HepG2 (cell line): ENCODE measurements at regions of chr2 and their contacts with region 1.

Region 1: DNA sequence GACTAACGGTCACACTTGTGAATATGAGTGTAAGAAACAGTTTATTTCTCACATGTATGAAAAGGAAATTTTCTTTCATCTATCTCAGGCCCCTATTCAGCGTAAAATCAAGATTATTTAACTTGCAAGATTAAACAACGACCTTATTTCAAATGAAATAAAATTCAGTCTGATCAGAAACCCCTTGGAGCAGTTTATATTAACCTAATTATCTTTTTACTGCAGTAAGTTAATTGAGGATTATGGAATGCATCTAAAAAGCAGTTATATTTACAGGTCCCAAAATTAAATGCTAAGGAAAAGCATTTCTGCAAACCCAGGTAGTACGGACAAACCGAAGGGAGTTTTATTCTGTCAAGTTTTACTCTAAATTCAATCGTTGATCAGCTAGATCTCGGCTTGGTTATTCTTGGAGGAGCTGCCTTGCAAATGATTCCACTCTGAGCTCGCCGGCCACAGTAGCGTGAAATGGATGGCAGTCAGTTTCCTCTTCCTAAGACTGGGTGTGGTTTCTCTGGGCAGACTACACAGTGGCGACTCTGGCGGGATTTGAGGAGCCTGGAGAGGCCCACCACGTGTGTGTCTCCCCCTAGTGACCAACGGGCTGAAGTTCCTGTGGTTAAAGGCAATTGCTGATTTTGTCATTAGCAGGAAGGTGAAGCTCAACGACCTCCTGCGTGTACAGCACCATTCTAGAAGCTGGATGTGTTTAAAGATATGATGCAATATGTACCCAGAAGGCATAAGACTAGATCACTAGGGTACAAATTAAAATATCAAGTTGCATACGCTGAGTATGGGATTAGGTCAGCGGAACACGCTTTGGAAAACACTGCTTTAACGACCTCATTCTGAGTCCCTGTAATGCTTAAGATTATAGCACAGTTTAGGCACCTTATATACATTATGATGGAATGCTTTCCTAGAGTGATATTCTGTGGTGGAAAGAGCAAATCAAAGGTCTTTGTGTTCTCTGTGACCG is 36.4 kb downstream of the PRKRA start:
- DNase-seq: peak; percentile 90
- ATAC-seq: peak; percentile 96
- H3K4me3 ChIP-seq: peak overlapping the region; percentile 60 to 75 (median 65)
- H3K27ac ChIP-seq: no peak overlapping the region
- H3K4me1 ChIP-seq: peaks cover 16% of the 10 kb centered on the region; the same call in 1 of the 2 replicates
- H3K27me3 ChIP-seq: peaks cover 0 to 9% of the 10 kb centered on the region in 2 experiments; a peak in 1 of 5 replicates
- CTCF ChIP-seq: peak; percentile 97
- EP300 ChIP-seq: no peak; a peak in 1 of 4 replicates
- POLR2A ChIP-seq: no peak
- RAD21 ChIP-seq: peak; percentile 86

Region 2: DNA sequence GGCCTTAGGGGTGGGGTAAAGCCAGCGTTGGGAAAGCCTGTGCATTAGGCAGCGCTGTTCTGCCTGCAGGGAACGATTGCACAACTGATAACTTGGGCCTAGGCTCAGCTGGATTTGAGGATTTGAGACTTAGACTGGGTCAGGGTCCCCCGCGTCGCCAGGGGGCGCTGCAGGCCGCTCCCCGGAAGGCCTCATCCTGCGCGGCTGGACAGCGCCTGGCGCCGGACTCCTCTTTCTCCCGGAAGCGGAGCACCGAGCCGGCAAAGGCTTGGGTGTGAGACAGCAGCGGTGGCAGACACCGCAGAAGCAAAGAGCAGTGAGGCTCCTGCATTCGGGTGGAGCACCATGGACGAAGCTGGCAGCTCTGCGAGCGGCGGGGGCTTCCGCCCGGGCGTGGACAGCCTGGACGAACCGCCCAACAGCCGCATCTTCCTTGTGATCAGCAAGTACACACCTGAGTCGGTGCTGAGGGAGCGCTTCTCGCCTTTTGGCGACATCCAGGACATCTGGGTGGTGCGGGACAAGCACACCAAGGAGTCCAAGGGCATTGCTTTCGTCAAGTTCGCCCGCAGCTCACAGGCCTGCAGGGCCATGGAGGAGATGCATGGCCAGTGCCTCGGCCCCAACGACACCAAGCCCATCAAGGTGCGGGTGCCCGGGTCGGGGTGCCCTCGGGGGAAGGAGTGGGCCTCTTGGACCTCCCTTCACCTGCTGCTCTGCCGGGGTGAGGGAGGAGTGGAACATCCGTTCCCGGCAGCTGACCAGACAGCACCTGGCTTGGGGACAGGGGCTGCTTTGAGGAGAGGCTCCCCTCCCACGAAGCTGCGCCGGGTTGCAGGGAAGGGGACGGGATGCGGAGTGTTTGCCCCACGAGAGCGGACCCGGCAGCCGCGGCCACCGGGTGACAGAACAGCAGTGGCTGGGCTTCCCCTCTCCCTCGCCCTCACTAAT is 302.1 kb before region 1 on chr2 and contains the start of gene RBM45:
- CTCF ChIA-PET with region 1: interaction called, 6 read pairs
- POLR2A ChIA-PET with region 1: interaction called, 10 read pairs
- in situ Hi-C with region 1: loop called (anchors 10 kb)
- intact Hi-C with region 1: loop called (anchors 1 kb)
- DNase-seq: peak; percentile 92
- ATAC-seq: peak; percentile 98
- H3K4me3 ChIP-seq: peak within 1 kb of the TSS; percentile 65 to 95 (median 87)
- H3K27ac ChIP-seq: peak within 1 kb of the TSS; percentile 68
- H3K4me1 ChIP-seq: peaks cover 15% of the 10 kb centered on the region
- H3K27me3 ChIP-seq: no peaks in the 10 kb centered on the region
- CTCF ChIP-seq: peak; percentile 99
- EP300 ChIP-seq: peak; percentile 40 to 66; a peak in 1 of 4 replicates
- POLR2A ChIP-seq: peak; percentile 97
- RAD21 ChIP-seq: peak; percentile 78
- total RNA-seq, gene RBM45: 25.2 and 30.4 TPM in 2 replicates

Region 3: GRCh38 chr2:178306352-178307073 is 108.0 kb before region 1 on chr2:
- CTCF ChIA-PET with region 1: interaction called, 11 read pairs
- POLR2A ChIA-PET with region 1: no interaction called
- in situ Hi-C with region 1: loop called (anchors 10 kb)
- intact Hi-C with region 1: loop called (anchors 1 kb)
- DNase-seq: peak; percentile 62
- ATAC-seq: peak; percentile 100
- H3K4me3 ChIP-seq: no peak overlapping the region
- H3K27ac ChIP-seq: no peak overlapping the region
- H3K4me1 ChIP-seq: no peaks in the 10 kb centered on the region
- H3K27me3 ChIP-seq: no peaks in the 10 kb centered on the region
- CTCF ChIP-seq: peak; percentile 87
- EP300 ChIP-seq: no peak
- POLR2A ChIP-seq: no peak
- RAD21 ChIP-seq: peak; percentile 68

Region 4: DNA sequence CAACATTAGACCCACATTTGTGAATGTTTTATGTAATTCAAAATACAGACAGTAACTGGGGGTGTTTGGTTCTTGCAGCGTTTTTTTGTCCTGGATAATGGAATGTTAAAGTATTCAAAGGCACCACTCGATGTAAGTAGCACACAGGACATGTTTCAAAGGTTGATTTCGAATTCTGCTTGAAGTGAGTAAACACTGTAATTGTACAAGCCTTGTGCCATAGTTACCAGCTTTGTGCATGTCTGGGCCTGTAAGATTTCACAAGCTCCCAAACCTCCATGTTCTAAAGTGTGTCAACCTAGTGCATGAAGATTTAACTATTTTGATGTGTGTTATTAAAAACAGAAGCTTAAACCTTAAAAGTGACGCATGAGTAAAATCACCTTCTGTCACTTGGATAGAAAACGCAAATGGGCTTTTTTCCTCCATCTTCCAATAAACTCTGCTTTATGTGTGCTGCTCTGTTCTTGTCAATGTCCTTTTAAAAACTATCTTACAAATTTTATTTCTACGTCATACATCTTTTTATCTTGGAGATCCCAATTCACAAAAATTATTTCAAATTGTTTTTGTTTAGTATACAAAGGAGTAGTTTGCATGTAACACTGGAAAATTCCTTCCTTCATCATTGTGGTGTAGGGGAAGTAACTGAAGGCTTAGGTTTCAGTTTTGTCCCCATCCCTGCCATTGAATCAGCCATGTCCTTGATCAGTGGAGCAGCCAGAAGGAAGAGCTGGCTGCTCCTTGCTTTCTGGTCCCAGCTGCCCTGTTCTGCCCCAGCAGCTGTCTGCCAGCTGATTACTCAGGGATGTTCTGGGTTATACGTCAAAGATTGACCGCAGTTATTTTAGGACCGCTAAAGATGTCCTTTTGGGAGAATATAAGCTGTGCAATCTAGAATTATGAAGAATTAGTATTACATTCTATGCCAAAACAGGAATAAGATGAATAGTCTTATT is 82.8 kb before region 1 on chr2:
- CTCF ChIA-PET with region 1: no interaction called
- POLR2A ChIA-PET with region 1: no interaction called
- in situ Hi-C with region 1: no loop called
- intact Hi-C with region 1: no loop called
- DNase-seq: peak; percentile 70
- ATAC-seq: peak; percentile 92
- H3K4me3 ChIP-seq: no peak overlapping the region
- H3K27ac ChIP-seq: no peak overlapping the region
- H3K4me1 ChIP-seq: peaks cover 48% of the 10 kb centered on the region
- H3K27me3 ChIP-seq: peaks cover 0 to 3% of the 10 kb centered on the region in 2 experiments; a peak in 1 of 5 replicates
- CTCF ChIP-seq: no peak
- EP300 ChIP-seq: peak in 1 of 2 experiments; percentile 53; a peak in 1 of 4 replicates
- POLR2A ChIP-seq: no peak
- RAD21 ChIP-seq: no peak

Region 5: DNA sequence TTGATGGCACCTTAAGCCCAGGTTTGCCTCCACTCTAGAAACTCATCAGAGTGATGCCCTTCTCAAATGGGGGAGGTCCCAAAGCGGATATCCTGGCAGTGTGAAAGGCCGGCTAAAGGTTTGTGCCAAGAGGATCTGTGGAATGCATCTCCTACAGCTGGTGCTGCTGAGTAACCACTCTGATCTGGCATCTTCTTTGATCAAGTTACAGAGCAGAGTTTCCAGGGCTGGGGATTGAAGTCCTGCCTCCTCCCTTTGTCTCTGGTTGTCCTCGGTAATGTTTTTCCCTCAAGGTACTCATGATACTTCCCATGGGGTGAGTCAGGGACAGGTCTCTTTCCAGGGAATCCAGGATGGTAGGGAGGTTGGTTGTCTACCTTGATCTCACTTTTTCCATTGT is 11.8 kb after region 1 on chr2:
- CTCF ChIA-PET with region 1: no interaction called
- POLR2A ChIA-PET with region 1: interaction called, 47 read pairs
- in situ Hi-C with region 1: no loop called
- intact Hi-C with region 1: no loop called
- DNase-seq: no peak
- ATAC-seq: no peak
- H3K4me3 ChIP-seq: no peak overlapping the region
- H3K27ac ChIP-seq: no peak overlapping the region
- H3K4me1 ChIP-seq: peaks cover 25% of the 10 kb centered on the region
- H3K27me3 ChIP-seq: no peaks in the 10 kb centered on the region
- CTCF ChIP-seq: no peak
- EP300 ChIP-seq: no peak
- POLR2A ChIP-seq: no peak
- RAD21 ChIP-seq: no peak

Region 6: DNA sequence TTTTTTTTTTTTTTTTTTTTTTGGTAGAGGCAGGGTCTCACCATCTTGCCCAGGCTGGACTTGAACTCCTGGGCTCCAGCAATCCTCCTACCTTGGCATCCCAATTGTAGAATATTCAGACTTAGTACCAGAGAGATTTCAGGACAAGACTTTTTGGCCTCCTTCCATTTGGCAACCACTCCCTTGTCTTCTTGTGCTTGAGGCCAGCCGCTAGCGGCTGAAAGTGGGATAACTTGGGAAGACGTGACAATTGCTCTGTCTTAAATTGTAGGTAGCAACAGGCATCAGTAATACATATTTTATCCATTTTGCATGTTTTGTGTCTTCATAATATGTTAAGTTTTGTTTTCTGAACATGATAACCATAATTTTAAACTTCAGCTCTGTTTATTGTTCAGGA is 446.0 kb after region 1 on chr2:
- CTCF ChIA-PET with region 1: no interaction called
- POLR2A ChIA-PET with region 1: no interaction called
- in situ Hi-C with region 1: no loop called
- intact Hi-C with region 1: no loop called
- DNase-seq: no peak
- ATAC-seq: no peak
- H3K4me3 ChIP-seq: no peak overlapping the region
- H3K27ac ChIP-seq: no peak overlapping the region
- H3K4me1 ChIP-seq: no peaks in the 10 kb centered on the region
- H3K27me3 ChIP-seq: peaks cover 0 to 9% of the 10 kb centered on the region in 2 experiments; a peak in 2 of 5 replicates
- CTCF ChIP-seq: no peak
- EP300 ChIP-seq: no peak
- POLR2A ChIP-seq: no peak
- RAD21 ChIP-seq: no peak